SK-N-SH (cell line): ENCODE measurements at regions of chr12 and their contacts with region 1.

Region 1: DNA sequence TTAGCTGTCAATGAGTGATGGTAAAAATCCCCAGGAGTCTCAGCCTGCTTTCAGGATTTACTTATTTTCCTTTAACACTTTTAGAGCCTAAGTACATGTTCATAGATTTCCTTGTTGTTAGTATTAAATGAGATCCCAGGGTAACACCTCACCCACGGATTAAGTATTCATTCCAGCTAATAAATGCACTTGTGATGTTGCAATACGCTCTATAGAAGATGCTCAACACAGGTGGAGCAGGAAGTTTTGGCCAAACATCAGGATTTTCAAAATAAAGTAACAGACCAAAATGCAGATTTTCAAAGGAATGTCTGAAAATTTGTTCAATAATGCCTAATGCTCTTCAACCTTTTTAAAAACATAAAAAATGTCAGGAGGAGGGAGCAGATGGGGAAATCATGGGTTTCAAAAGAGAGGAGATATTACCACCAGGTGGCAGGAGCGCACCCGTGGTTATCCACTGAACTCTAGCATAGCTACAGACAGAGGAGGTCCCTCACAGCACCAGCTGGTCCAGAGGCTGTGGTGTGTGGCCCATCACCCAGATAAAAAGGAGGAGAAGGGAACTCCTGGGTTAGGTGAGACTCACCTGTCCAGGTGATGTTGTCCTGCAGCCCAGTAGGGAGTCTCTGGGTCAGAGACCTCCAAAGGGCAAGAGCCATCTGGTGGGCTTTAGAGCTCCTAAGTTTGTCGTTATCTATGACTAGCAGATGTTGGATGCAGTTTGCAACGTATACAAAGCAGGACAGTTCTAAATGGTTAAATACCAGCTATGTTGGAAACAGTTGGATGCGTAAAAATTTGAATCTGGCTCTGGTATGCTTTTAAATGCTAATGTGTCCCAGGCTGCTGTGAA is 1158.4 kb upstream of the TMEM132C start:
- DNase-seq: peak; percentile 62
- H3K4me3 ChIP-seq: no peak overlapping the region
- H3K27ac ChIP-seq: no peak overlapping the region
- H3K4me1 ChIP-seq: no peaks in the 10 kb centered on the region
- H3K27me3 ChIP-seq: no peaks in the 10 kb centered on the region
- CTCF ChIP-seq: peak; percentile 50
- EP300 ChIP-seq: no peak
- RAD21 ChIP-seq: peak; percentile 73

Region 2: DNA sequence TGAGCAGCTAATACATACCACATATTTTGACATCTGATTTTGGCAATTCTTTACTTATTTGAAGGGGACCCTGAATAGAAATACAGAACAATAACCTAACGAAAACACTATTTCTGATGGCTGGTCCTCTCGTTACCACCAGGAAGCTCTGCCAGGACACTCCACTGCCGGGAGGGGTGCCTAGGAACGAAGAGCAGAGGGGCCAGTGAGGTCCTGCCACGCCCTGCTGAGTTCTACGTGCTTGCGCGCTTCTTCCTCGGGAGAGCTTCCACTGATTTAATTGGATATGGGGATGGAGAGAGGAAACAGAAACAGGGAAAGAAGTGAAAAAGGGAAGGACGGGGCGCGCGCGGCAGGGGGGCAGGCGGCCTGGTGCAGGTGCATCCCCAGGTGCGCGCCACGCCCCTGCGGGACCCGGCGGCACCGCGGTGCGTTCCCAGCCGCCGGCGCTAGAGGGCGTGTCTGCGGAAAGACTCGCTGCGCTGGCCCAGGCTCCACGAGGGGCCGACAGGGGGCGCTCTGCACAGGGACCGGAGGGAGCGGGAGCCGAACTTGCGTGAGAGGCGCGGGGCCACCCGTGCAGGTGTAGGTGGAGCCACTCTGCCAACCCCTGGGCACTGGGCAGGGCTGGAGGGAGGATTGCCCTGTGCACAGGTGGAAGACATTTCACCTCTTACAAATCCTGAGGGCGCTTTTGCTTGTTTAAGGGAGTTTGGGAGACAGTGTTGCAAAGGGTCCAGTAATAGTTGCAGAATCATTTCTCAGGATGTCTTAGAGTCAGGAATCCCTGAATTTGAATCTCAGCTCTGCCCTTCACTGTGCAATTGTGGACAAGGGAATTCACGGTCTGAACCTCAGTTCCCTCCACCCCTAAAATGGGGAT is 172.0 kb after region 1 on chr12:
- CTCF ChIA-PET with region 1: interaction called, 13 read pairs
- POLR2A ChIA-PET with region 1: no interaction called
- DNase-seq: peak; percentile 33
- H3K4me3 ChIP-seq: no peak overlapping the region
- H3K27ac ChIP-seq: no peak overlapping the region
- H3K4me1 ChIP-seq: peaks cover 0 to 9% of the 10 kb centered on the region in 2 experiments; a peak in 1 of 4 replicates
- H3K27me3 ChIP-seq: no peaks in the 10 kb centered on the region
- CTCF ChIP-seq: no peak; the same call in 1 of the 2 replicates
- EP300 ChIP-seq: no peak
- RAD21 ChIP-seq: no peak

Region 3: GRCh38 chr12:127304751-127305725 is 196.4 kb after region 1 on chr12:
- CTCF ChIA-PET with region 1: interaction called, 11 read pairs
- POLR2A ChIA-PET with region 1: no interaction called
- DNase-seq: no peak
- H3K4me3 ChIP-seq: no peak overlapping the region
- H3K27ac ChIP-seq: no peak overlapping the region
- H3K4me1 ChIP-seq: no peaks in the 10 kb centered on the region
- H3K27me3 ChIP-seq: no peaks in the 10 kb centered on the region
- CTCF ChIP-seq: no peak
- EP300 ChIP-seq: no peak
- RAD21 ChIP-seq: no peak

Region 4: DNA sequence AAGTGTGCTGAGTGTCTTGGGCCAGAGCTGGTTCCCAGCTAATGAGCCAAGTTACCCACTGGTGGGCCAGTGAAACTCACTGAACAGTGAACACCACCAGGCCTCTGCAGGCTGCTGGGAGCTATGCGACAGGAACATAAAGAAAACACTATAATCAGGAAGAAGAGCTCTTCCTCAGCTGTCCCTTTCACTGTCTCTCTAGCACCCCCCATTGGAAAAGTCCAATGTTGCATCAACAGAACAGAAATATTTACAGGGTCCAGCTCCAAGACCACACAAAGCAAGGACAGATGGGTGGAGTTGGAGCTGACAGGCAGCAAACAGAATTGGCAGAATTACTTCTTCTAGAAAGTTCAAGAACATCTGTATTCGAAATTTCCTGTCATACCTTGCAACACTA is 254.8 kb after region 1 on chr12:
- CTCF ChIA-PET with region 1: interaction called, 11 read pairs
- POLR2A ChIA-PET with region 1: no interaction called
- DNase-seq: no peak
- H3K4me3 ChIP-seq: peak overlapping the region in 1 of 2 experiments; percentile 16; a peak in 1 of 4 replicates
- H3K27ac ChIP-seq: no peak overlapping the region
- H3K4me1 ChIP-seq: no peaks in the 10 kb centered on the region
- H3K27me3 ChIP-seq: no peaks in the 10 kb centered on the region
- CTCF ChIP-seq: 0 out of 2 replicates have a peak, but pooled peaks have one; percentile 15
- EP300 ChIP-seq: no peak
- RAD21 ChIP-seq: no peak